A549 (cell line): ENCODE measurements at regions of chr5 and their contacts with region 1.

Region 1: DNA sequence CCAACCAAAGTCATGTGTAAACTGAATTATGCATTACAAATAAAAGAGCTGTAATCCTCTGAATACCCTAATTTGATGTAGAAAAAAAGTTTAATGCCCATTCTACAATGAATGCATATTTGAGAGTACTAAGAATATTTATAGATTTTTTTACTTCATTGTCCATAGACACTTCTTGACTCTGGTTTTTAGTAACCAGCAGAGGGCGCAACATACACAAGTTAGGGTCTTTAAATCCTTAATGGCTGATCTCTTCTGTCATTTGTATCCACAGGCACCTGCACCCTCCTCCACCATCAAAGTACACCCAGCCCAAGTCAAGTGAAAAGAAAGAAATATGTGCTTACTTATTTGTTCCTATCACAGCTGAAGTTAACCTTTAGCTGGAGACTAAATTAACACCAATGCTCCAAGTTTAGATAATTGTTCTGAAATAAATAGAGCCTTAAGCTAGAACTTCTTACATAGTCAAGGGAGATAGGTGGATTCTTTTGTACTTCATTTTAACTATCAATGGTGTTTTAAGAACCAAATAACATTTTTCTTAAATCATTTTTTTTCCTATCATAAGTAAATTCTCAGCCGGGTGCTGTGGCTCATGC is 524.2 kb upstream of the DAB2 start:
- DNase-seq: peak; percentile 26 to 77
- ATAC-seq: peak; percentile 74 to 86; a peak in 5 of 6 replicates
- H3K4me3 ChIP-seq: no peak overlapping the region
- H3K27ac ChIP-seq: no peak overlapping the region
- H3K4me1 ChIP-seq: no peaks in the 10 kb centered on the region
- CTCF ChIP-seq: peak; percentile 73
- EP300 ChIP-seq: no peak
- POLR2A ChIP-seq: no peak
- RAD21 ChIP-seq: peak; percentile 77 to 83

Region 2: DNA sequence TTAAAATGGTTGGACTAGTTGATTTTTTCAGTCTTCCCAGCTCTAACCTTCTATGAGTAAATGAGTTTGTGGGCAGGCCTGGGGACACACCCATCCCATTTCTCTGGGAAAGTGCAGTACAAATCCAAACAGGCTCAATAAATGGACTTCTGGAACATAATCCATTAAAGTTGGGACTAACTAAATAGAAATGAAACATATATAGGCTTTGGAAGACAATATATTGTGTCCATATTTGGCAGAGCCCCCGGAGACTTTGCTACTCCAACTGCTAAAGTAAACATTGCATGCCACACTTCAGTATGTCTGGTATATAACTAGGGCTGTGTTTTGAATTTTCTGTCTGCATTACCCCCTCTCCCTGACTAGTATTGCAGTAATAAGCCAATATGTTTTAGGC is 332.8 kb before region 1 on chr5:
- CTCF ChIA-PET with region 1: no interaction called
- POLR2A ChIA-PET with region 1: no interaction called
- DNase-seq: no peak
- ATAC-seq: no peak
- H3K4me3 ChIP-seq: no peak overlapping the region
- H3K27ac ChIP-seq: no peak overlapping the region
- H3K4me1 ChIP-seq: no peaks in the 10 kb centered on the region
- CTCF ChIP-seq: no peak
- EP300 ChIP-seq: no peak
- POLR2A ChIP-seq: no peak
- RAD21 ChIP-seq: no peak

Region 3: GRCh38 chr5:40688127-40688761 is 739.3 kb after region 1 on chr5:
- CTCF ChIA-PET with region 1: interaction called, 20 read pairs
- POLR2A ChIA-PET with region 1: no interaction called
- DNase-seq: peak; percentile 69 to 88
- ATAC-seq: peak; percentile 96 to 97
- H3K4me3 ChIP-seq: no peak overlapping the region
- H3K27ac ChIP-seq: peak overlapping the region; percentile 47 to 68; a peak in 4 of 6 replicates
- H3K4me1 ChIP-seq: peaks cover 29% of the 10 kb centered on the region
- CTCF ChIP-seq: peak; percentile 93
- EP300 ChIP-seq: no peak
- POLR2A ChIP-seq: no peak
- RAD21 ChIP-seq: peak; percentile 98 to 99